Transverse colon (tissue), 4 donors: ENCODE measurements at regions of chr1 and their contacts with region 1.

Region 1: DNA sequence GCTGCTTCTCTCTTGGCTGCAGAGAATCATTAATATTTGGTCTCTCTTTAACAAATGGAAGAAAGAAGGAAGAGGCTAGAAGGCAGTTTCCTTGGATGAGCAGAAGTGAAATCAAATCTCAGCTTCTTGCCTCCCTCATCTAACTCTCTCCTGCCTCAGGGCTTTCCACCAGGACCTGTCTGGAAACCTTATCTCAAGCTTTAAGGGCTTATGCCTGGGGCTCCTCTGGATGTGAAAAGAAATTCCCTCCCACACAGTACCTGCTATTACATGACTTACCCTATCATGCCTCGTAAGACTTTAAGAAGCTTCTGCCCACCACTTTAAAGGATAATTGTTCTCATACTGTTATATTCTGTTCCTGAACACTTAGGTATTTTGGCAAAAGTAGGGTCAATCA is 8.9 kb downstream of the VTCN1 start:
- DNase-seq: no peak
- H3K4me3 ChIP-seq: no peak overlapping the region
- H3K27ac ChIP-seq: no peak overlapping the region
- H3K4me1 ChIP-seq: no peaks in the 10 kb centered on the region
- H3K27me3 ChIP-seq: no peaks in the 10 kb centered on the region
- CTCF ChIP-seq: no peak
- EP300 ChIP-seq: no peak
- POLR2A ChIP-seq: no peak

Region 2: GRCh38 chr1:117290890-117291289 is 89.1 kb after region 1 on chr1:
- in situ Hi-C with region 1: no loop called
- intact Hi-C with region 1: loop called (anchors 1 kb)
- DNase-seq: no peak
- H3K4me3 ChIP-seq: no peak overlapping the region
- H3K27ac ChIP-seq: no peak overlapping the region
- H3K4me1 ChIP-seq: peaks cover 0 to 3% (median 0%) of the 10 kb centered on the region in 4 donors
- H3K27me3 ChIP-seq: peaks cover 8% of the 10 kb centered on the region
- CTCF ChIP-seq: no peak
- EP300 ChIP-seq: no peak
- POLR2A ChIP-seq: no peak